Activated CD4-positive, alpha-beta memory T cell treated with anti-CD3 and anti-CD28 coated beads, Interleukin-2, amount 10 ng/mL, durations not matched to agents 7 days and 5 days (primary cell): ENCODE measurements at regions of chr15 and their contacts with region 1.

Region 1: DNA sequence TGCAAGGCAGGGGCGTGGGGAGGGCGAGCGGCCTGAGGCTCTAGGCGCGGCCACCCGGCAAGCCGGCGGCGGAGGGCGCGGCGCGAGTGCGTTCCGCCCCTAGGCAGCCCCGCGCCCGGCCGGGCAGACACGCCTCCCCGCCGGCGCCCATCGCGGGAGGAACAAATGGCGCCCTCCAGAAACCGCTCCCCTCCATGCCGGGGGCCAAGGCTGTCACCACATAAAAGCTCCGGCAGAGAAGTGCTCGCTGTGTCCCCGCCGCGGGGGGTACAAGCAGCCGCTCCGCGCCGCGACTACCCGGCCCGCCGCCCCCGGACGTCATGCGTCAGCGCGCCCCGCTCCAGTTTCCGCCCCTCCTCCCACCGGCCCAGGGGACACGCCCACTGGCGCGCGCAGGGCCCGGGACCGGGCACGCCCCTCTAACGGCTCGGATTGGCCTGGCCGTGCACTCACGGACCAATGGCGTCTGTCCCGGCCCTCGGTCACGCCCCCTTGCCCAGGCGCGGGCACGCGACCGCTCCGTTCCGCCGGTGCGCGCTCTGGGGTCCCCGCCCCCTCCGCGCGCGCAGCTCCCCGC is 391 bp upstream of the KLF13 start:
- DNase-seq: peak; percentile 100
- H3K4me3 Mint-ChIP-seq: peak overlapping the region; percentile 88
- H3K27ac Mint-ChIP-seq: peak overlapping the region; percentile 86
- H3K4me1 Mint-ChIP-seq: peaks cover 43% of the 10 kb centered on the region
- H3K27me3 Mint-ChIP-seq: no peaks in the 10 kb centered on the region

Region 2: GRCh38 chr15:31215490-31216214 is 110.6 kb before region 1 on chr15:
- CTCF ChIA-PET with region 1: interaction called, 14 read pairs
- POLR2A ChIA-PET with region 1: interaction called, 62 read pairs
- DNase-seq: peak; percentile 85
- H3K4me3 Mint-ChIP-seq: peak overlapping the region; percentile 78
- H3K27ac Mint-ChIP-seq: peak overlapping the region; percentile 78
- H3K4me1 Mint-ChIP-seq: peaks cover 47% of the 10 kb centered on the region
- H3K27me3 Mint-ChIP-seq: no peaks in the 10 kb centered on the region

Region 3: DNA sequence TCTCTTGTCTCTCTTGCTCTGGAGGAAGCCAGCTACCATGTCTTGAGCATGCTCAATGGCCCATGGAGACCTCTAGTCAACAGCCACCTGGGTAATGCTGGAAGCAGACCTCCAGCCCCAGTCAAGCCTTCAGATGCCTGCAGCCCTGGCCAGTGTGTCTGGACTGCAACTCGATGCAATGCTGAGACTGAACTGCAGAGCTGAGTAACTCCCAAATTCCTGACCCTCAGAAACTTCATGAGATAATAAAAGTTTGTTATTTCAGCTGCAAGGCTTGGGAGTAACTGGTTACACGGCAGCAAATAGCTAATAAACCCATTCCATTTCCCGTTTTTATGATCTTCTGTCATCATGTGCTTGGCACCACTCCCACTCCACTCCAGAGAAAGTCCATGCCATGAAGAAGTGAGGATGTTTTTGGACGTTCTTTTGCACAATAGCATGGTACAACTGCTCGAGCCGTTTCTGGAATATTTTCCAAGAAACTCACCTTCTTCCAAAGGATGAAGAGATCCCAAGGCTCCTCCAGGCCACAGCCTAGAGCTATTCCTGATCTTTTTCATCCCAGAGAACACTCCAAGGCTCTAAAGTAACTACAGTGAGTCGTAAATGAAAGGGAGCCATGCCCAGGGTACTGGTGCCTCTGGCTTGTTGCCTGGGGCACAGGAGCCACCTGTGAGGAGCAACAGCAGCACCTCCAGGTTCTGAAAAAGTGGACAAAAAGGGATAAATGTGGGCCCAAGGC is 71.6 kb before region 1 on chr15:
- CTCF ChIA-PET with region 1: no interaction called
- POLR2A ChIA-PET with region 1: no interaction called
- DNase-seq: no peak
- H3K4me3 Mint-ChIP-seq: no peak overlapping the region
- H3K27ac Mint-ChIP-seq: no peak overlapping the region
- H3K4me1 Mint-ChIP-seq: peaks cover 34% of the 10 kb centered on the region
- H3K27me3 Mint-ChIP-seq: peaks cover 14% of the 10 kb centered on the region

Region 4: GRCh38 chr15:31265871-31266711 is 60.2 kb before region 1 on chr15:
- CTCF ChIA-PET with region 1: interaction called, 10 read pairs
- POLR2A ChIA-PET with region 1: interaction called, 128 read pairs
- DNase-seq: peak; percentile 82
- H3K4me3 Mint-ChIP-seq: peak overlapping the region; percentile 22
- H3K27ac Mint-ChIP-seq: peak overlapping the region; percentile 89
- H3K4me1 Mint-ChIP-seq: peaks cover 84% of the 10 kb centered on the region
- H3K27me3 Mint-ChIP-seq: peaks cover 8% of the 10 kb centered on the region

Region 5: GRCh38 chr15:31285772-31286261 is 40.4 kb before region 1 on chr15:
- CTCF ChIA-PET with region 1: no interaction called
- POLR2A ChIA-PET with region 1: no interaction called
- DNase-seq: no peak
- H3K4me3 Mint-ChIP-seq: no peak overlapping the region
- H3K27ac Mint-ChIP-seq: no peak overlapping the region
- H3K4me1 Mint-ChIP-seq: no peaks in the 10 kb centered on the region
- H3K27me3 Mint-ChIP-seq: peaks cover 34% of the 10 kb centered on the region

Region 6: DNA sequence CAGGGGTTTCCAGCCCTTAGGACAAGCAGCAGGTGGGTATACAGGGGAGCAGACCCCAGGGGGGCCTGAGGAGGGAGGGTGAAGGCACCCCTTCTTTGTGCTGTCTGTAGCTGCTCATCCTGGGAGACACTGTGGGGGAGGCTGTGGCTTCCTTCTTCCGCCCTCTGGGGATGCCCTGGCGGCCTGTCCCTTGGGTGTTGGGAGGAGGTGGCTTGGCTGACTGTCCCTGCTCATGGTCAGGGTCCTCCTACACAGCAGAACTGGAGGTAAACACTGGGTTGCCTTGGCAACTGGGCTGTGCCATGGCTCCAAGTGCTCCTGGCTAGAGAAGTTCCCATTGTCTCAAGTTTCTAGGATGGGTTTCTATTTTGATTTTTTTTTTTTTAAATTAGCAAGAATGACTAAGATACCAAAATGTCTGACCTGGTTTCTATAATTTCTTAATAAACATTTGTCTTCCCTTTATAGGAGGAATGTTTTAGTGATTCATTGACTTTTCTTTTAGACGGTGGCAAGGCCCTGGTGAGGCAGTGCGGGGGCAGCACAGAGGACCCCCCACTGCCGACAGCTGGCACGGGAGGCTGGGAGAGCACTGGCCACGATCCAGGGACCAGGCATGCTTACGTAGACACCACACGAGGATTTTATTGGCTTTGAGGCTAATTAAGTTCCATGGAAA is 12.8 kb after region 1 on chr15:
- CTCF ChIA-PET with region 1: interaction called, 5 read pairs
- POLR2A ChIA-PET with region 1: interaction called, 161 read pairs
- DNase-seq: peak; percentile 56
- H3K4me3 Mint-ChIP-seq: peak overlapping the region; percentile 36
- H3K27ac Mint-ChIP-seq: peak overlapping the region; percentile 64
- H3K4me1 Mint-ChIP-seq: peaks cover 99% of the 10 kb centered on the region
- H3K27me3 Mint-ChIP-seq: no peaks in the 10 kb centered on the region

Region 7: GRCh38 chr15:31344823-31345605 is 18.8 kb after region 1 on chr15:
- CTCF ChIA-PET with region 1: interaction called, 12 read pairs
- POLR2A ChIA-PET with region 1: interaction called, 161 read pairs
- DNase-seq: no peak
- H3K4me3 Mint-ChIP-seq: peak overlapping the region; percentile 89
- H3K27ac Mint-ChIP-seq: peak overlapping the region; percentile 97
- H3K4me1 Mint-ChIP-seq: peaks cover 100% of the 10 kb centered on the region
- H3K27me3 Mint-ChIP-seq: no peaks in the 10 kb centered on the region

Region 8: DNA sequence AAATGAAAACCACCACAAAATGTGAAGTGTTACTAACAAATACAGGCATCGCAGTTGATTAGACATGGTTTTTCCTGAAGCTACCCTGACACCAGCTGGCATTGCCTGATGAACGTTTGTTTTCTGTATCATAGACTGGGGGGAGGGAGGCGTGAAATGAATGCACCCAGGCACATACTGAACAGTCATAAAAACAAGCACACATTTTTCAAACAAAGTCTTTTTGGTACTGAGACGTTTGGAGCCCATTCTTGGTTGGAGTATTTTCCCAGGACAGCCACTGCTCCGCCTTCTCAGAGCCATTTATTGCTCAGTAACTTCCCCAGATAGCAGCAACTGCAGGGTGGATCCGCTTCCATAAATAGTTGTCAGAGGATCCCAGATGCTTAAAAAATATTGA is 52.8 kb after region 1 on chr15:
- CTCF ChIA-PET with region 1: no interaction called
- POLR2A ChIA-PET with region 1: no interaction called
- DNase-seq: no peak
- H3K4me3 Mint-ChIP-seq: no peak overlapping the region
- H3K27ac Mint-ChIP-seq: no peak overlapping the region
- H3K4me1 Mint-ChIP-seq: peaks cover 16% of the 10 kb centered on the region
- H3K27me3 Mint-ChIP-seq: no peaks in the 10 kb centered on the region

Region 9: GRCh38 chr15:31483053-31483985 is 157.1 kb after region 1 on chr15:
- CTCF ChIA-PET with region 1: interaction called, 7 read pairs
- POLR2A ChIA-PET with region 1: interaction called, 22 read pairs
- DNase-seq: peak; percentile 64
- H3K4me3 Mint-ChIP-seq: peak overlapping the region; percentile 86
- H3K27ac Mint-ChIP-seq: peak overlapping the region; percentile 86
- H3K4me1 Mint-ChIP-seq: peaks cover 63% of the 10 kb centered on the region
- H3K27me3 Mint-ChIP-seq: peaks cover 7% of the 10 kb centered on the region